Aorta (tissue), 5 donors: ENCODE measurements at regions of chr7 and their contacts with region 1.

Region 1: DNA sequence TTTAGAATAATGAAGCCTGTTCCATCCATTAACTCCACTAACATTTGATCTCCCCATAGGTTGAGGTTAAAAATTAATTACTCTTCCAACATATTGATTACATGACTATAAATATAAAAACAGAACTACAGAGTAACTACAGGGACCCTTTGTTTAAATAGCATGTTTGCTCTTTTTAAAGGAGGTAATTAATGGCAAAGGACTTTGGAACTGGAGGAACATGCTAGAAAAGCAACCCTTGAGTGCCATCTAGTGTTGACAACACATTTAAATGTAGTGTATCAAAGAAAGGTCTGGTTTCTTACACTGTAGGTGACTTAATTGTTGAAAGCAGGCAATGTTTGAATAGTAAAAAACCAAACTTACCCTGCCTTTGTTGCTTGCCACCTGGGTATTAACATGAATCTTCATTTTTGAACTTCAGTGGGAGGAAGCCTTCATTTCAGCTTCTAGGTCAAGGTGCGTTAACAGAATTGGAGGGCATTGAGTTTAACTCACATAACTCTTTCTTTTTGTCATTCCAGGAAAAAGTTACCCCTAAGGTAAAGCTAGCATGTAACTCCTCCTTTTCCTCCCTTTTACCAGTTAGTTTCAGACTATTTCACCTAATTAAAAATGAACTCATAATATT is 52.6 kb upstream of the CAPZA2 start:
- DNase-seq: no peak
- ATAC-seq: peak; percentile 83
- H3K4me3 ChIP-seq: no peak overlapping the region
- H3K27ac ChIP-seq: no peak overlapping the region
- H3K4me1 ChIP-seq: no peaks in the 10 kb centered on the region
- H3K27me3 ChIP-seq: no peaks in the 10 kb centered on the region

Region 2: GRCh38 chr7:116173051-116174028 is 636.4 kb before region 1 on chr7:
- intact Hi-C with region 1: loop called in 1 of 2 experiments (anchors 5 kb)
- DNase-seq: no peak
- ATAC-seq: peak; percentile 65
- H3K4me3 ChIP-seq: no peak overlapping the region
- H3K27ac ChIP-seq: no peak overlapping the region
- H3K4me1 ChIP-seq: peaks cover 0 to 6% of the 10 kb centered on the region in 2 donors
- H3K27me3 ChIP-seq: no peaks in the 10 kb centered on the region

Region 3: DNA sequence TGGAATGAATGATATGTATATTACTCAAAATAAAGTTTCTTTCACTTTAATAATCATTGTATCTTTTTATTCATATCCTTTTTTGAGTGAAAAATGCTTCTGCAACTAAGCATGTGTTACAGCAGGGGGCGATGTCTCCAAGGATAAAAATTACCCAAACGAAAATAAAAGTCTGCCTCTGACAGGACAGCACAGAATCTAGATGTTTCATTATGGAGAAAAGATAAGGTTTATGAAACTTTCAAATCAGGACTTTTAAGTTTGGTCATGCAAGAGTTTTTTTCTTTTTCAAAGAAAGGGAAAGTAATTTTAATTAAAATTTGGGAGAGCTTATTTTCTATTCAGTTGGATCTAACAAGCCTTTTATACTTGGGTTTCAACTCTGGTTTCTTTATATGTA is 551.0 kb before region 1 on chr7:
- intact Hi-C with region 1: loop called (anchors 5 to 10 kb)
- DNase-seq: no peak
- ATAC-seq: peak; percentile 80
- H3K4me3 ChIP-seq: no peak overlapping the region
- H3K27ac ChIP-seq: peak overlapping the region in 1 of 2 donors; percentile 22
- H3K4me1 ChIP-seq: peaks cover 0 to 2% of the 10 kb centered on the region in 2 donors
- H3K27me3 ChIP-seq: no peaks in the 10 kb centered on the region

Region 4: GRCh38 chr7:116671681-116672595 is 137.8 kb before region 1 on chr7 and contains the start of gene MET:
- intact Hi-C with region 1: loop called (anchors 1 to 5 kb)
- DNase-seq: peak; percentile 76 to 90
- ATAC-seq: peak; percentile 93
- H3K4me3 ChIP-seq: peak within 1 kb of the TSS; percentile 7 to 53
- H3K27ac ChIP-seq: peak within 1 kb of the TSS in 1 of 2 donors; percentile 55
- H3K4me1 ChIP-seq: no peaks in the 10 kb centered on the region
- H3K27me3 ChIP-seq: no peaks in the 10 kb centered on the region
- total RNA-seq, gene MET: 16.8 to 24.6 TPM

Region 5: DNA sequence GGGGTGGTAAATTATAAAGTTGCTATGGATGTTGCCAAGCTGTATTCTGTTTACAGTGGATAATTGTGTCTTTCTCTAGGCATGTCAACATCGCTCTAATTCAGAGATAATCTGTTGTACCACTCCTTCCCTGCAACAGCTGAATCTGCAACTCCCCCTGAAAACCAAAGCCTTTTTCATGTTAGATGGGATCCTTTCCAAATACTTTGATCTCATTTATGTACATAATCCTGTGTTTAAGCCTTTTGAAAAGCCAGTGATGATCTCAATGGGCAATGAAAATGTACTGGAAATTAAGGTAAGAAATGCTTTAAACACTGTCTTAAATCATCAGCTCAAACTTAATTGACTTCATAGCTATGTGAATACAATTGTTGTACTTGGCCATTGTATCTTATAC is 46.8 kb before region 1 on chr7:
- intact Hi-C with region 1: no loop called
- DNase-seq: no peak
- ATAC-seq: no peak
- H3K4me3 ChIP-seq: no peak overlapping the region
- H3K27ac ChIP-seq: no peak overlapping the region
- H3K4me1 ChIP-seq: no peaks in the 10 kb centered on the region
- H3K27me3 ChIP-seq: no peaks in the 10 kb centered on the region